Sigmoid colon (tissue), 7 donors: ENCODE measurements at regions of chr17 and their contacts with region 1.

Region 1: GRCh38 chr17:63406689-63407330 is 39.3 kb downstream of the CYB561 start:
- DNase-seq: peak; percentile 85
- H3K4me3 ChIP-seq: no peak overlapping the region
- H3K27ac ChIP-seq: no peak overlapping the region
- H3K4me1 ChIP-seq: peaks cover 0 to 9% (median 8%) of the 10 kb centered on the region in 4 donors
- H3K27me3 ChIP-seq: no peaks in the 10 kb centered on the region
- CTCF ChIP-seq: peak; percentile 71 to 87 (median 76)
- EP300 ChIP-seq: no peak
- POLR2A ChIP-seq: no peak

Region 2: GRCh38 chr17:62703775-62704378 is 702.9 kb before region 1 on chr17:
- intact Hi-C with region 1: loop called (anchors 1 kb)
- DNase-seq: peak; percentile 87
- H3K4me3 ChIP-seq: peak overlapping the region; percentile 15 to 74 (median 60)
- H3K27ac ChIP-seq: peak overlapping the region; percentile 63 to 72 (median 70)
- H3K4me1 ChIP-seq: peaks cover 0 to 18% (median 14%) of the 10 kb centered on the region in 4 donors
- H3K27me3 ChIP-seq: peaks cover 0 to 9% (median 0%) of the 10 kb centered on the region in 3 donors
- CTCF ChIP-seq: peak; percentile 58 to 82 (median 65)
- EP300 ChIP-seq: no peak
- POLR2A ChIP-seq: no peak

Region 3: DNA sequence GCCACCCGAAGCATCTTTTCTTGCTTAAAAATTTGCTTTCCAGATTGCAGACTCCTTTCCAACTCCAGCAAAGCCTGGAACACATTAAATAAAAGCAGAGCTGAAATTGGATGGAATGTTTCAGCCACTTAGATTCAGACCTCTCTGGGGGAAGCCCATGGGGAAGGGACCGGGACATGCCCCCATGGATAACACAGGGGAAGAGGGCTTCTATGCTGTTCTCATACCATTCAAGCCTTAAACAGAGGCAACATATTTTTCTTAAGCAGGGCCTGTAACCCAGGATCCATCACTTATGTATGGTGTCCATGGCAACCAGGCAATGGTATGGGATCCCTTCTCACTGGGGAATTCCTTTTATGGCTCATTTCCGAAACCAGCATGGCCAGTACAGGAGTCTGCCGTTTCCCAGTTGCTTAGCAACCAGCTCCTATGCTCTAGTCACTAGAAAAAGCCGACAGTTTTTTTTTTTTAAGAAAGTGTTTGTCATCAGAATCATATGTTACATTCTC is 536.7 kb before region 1 on chr17:
- intact Hi-C with region 1: no loop called
- DNase-seq: no peak
- H3K4me3 ChIP-seq: no peak overlapping the region
- H3K27ac ChIP-seq: no peak overlapping the region
- H3K4me1 ChIP-seq: peaks cover 0 to 3% (median 0%) of the 10 kb centered on the region in 4 donors
- H3K27me3 ChIP-seq: no peaks in the 10 kb centered on the region
- CTCF ChIP-seq: no peak
- EP300 ChIP-seq: no peak
- POLR2A ChIP-seq: no peak

Region 4: GRCh38 chr17:62968445-62968923 is 438.3 kb before region 1 on chr17:
- intact Hi-C with region 1: loop called (anchors 5 kb)
- DNase-seq: no peak
- H3K4me3 ChIP-seq: no peak overlapping the region
- H3K27ac ChIP-seq: no peak overlapping the region
- H3K4me1 ChIP-seq: peaks cover 0 to 22% (median 14%) of the 10 kb centered on the region in 4 donors
- H3K27me3 ChIP-seq: no peaks in the 10 kb centered on the region
- CTCF ChIP-seq: peak; percentile 69 to 89 (median 74)
- EP300 ChIP-seq: no peak
- POLR2A ChIP-seq: no peak

Region 5: GRCh38 chr17:62995377-62995885 is 411.4 kb before region 1 on chr17:
- intact Hi-C with region 1: loop called (anchors 10 kb)
- DNase-seq: no peak
- H3K4me3 ChIP-seq: no peak overlapping the region
- H3K27ac ChIP-seq: no peak overlapping the region
- H3K4me1 ChIP-seq: no peaks in the 10 kb centered on the region
- H3K27me3 ChIP-seq: no peaks in the 10 kb centered on the region
- CTCF ChIP-seq: no peak
- EP300 ChIP-seq: no peak
- POLR2A ChIP-seq: no peak

Region 6: GRCh38 chr17:63082273-63082993 is 324.4 kb before region 1 on chr17:
- intact Hi-C with region 1: loop called (anchors 5 kb)
- DNase-seq: no peak
- H3K4me3 ChIP-seq: no peak overlapping the region
- H3K27ac ChIP-seq: no peak overlapping the region
- H3K4me1 ChIP-seq: no peaks in the 10 kb centered on the region
- H3K27me3 ChIP-seq: no peaks in the 10 kb centered on the region
- CTCF ChIP-seq: peak in 1 of 4 experiments; percentile 32
- EP300 ChIP-seq: no peak
- POLR2A ChIP-seq: no peak

Region 7: GRCh38 chr17:63455417-63455816 is 48.6 kb after region 1 on chr17:
- intact Hi-C with region 1: no loop called
- DNase-seq: no peak
- H3K4me3 ChIP-seq: no peak overlapping the region
- H3K27ac ChIP-seq: no peak overlapping the region
- H3K4me1 ChIP-seq: no peaks in the 10 kb centered on the region
- H3K27me3 ChIP-seq: no peaks in the 10 kb centered on the region
- CTCF ChIP-seq: no peak
- EP300 ChIP-seq: no peak
- POLR2A ChIP-seq: no peak